AG04449 (cell line): ENCODE measurements at regions of chr7 and their contacts with region 1.

Region 1: DNA sequence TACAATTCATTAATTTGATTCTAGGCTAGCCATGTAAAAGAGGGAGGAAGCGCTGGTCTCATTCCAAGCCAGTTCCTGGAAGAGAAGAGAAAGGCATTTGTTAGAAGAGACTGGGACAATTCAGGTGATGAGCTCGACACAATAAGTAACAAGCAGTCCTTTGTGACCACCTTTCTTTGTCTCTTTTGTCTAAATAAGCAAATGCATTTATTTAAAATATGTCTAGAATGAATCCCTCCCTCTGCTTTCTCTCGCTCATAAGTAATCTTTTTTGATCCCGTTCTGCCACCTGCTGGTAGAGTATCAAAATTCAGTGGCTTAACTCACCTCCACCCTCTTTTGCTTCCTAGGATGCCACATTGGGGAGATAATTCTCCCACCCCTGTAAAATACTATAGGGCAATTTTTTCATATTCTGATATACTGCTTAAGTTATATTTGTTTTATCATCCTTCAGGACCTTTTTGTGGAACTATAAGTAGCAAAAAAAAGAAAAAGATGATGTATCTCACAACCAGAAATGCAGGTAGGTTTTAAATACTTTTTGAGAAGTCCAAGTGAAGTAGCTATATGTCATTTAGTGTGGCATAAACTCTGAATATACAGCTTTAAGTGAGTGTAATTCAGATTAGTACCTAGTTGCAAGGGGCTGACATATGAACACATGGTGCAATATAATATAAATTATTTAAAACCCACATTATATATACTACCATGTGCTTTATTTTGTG is 91.5 kb downstream of the GSDME start:
- DNase-seq: no peak
- H3K4me3 ChIP-seq: no peak overlapping the region
- CTCF ChIP-seq: peak; percentile 57

Region 2: GRCh38 chr7:23863209-23863798 is 802.4 kb before region 1 on chr7:
- CTCF ChIA-PET with region 1: interaction called, 36 read pairs
- POLR2A ChIA-PET with region 1: no interaction called
- DNase-seq: no peak
- H3K4me3 ChIP-seq: no peak overlapping the region
- CTCF ChIP-seq: peak; percentile 54

Region 3: DNA sequence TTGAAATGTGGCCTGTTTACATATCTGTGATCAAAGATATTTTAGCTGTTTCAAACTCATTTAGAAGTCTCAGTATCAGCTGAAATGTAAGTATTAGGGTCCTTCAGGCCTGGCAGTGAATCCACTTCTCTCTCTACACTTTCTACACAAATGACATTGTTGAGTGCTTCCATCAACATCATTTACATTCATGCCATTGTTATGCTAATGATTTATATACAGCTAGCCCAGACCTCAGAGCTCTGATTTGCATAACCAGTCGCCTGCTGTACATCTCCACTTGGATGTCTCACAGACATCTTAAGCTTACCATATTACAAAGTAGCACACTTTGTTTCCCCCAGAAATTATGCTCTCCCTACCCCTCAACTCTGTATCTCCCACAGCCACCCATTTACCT is 20.0 kb after region 1 on chr7:
- CTCF ChIA-PET with region 1: interaction called, 14 read pairs
- POLR2A ChIA-PET with region 1: no interaction called
- DNase-seq: no peak
- H3K4me3 ChIP-seq: no peak overlapping the region
- CTCF ChIP-seq: no peak